Lower leg skin (tissue), 4 donors: ENCODE measurements at regions of chr12 and their contacts with region 1.

Region 1: DNA sequence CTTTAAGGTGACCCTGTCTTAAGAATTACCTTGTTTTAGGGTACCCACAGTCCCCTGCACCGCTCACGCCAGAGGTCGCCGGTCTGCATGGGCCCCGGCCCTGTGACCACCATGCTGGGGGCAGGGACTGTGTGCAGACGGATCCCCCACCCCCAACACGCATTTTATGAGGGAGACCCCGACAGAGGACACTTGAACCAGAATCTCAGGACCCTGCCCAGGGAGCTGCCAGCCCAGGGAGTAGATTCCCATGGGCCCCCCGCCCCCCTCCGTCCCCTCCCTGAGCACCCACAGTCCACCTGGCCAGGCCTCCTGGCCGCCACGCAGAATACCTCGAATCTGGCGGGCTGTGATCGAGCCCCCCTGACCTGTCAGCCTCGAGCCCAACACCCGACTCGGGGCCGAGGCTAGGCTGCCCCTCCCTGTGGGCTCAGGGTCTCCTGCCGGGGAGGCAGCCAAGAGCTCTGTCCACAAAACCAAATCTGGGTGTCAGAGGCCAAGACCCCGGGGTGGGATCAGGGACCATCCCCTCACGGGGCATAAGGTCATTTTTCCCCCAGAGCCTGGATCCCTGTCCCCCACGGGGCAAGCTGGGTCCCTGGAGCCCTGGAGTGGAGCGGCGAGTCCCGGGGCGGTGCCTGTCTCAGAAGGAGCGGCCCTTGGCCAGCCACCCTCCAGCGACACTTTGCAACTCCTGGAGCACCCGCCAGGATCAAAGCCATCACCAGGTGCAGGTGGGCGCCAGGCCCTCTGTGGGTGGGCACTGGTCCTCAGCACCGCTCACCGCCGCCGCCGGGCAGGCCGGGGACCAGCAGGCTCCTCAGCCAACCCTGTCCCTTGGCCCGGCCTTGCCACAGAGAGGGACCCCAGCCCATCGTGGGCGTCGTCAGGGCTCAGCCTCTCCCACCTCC is 155.8 kb upstream of the PKP2 start:
- DNase-seq: peak in 1 of 2 donors; percentile 78
- H3K4me3 ChIP-seq: no peak overlapping the region
- CTCF ChIP-seq: no peak
- POLR2A ChIP-seq: no peak

Region 2: GRCh38 chr12:32877601-32878459 is 174.6 kb before region 1 on chr12:
- intact Hi-C with region 1: no loop called
- DNase-seq: peak; percentile 72 to 93
- H3K4me3 ChIP-seq: no peak overlapping the region
- CTCF ChIP-seq: no peak
- POLR2A ChIP-seq: no peak

Region 3: DNA sequence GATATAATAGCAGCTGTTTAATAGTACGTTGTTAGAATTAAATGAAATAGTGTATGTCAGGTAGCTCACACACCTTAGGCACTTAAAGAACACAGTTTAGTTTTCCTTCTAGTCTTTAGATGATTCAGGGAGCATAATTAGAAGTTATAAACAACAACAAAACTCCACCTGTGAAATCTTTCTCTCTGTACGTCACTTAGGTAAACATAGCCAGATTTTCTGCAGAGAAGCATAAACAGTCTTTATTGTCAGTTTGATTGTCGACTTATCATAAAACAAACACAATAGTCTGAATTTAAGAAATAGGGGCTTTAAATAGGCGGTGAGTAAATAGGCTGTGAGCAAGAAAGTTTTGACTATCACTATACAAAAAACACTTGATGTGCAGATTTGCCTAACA is 71.3 kb before region 1 on chr12:
- intact Hi-C with region 1: loop called (anchors 2 kb)
- DNase-seq: no peak
- H3K4me3 ChIP-seq: no peak overlapping the region
- CTCF ChIP-seq: no peak
- POLR2A ChIP-seq: no peak

Region 4: DNA sequence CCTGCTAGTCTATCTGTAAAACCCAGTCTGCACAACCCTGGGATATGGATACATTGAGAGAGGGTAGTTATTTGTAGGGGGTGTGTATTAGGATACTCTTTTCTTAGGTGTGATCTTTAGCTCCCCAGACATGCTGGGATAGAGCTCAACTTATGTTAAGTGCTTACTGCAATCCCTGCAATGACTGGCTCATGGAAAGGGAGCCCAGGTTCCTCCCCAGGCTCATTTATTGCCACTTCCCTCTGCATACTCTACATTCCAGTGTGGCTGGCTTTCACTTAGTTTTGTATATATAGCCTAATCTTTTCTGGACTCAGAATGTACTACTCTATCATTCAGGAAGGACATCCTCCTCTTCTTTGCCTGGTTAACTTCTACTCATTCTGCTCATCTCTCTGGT is 215.2 kb after region 1 on chr12:
- intact Hi-C with region 1: no loop called
- DNase-seq: no peak
- H3K4me3 ChIP-seq: no peak overlapping the region
- CTCF ChIP-seq: no peak
- POLR2A ChIP-seq: no peak